IMR-90 (cell line): ENCODE measurements at regions of chr7 and their contacts with region 1.

Region 1: DNA sequence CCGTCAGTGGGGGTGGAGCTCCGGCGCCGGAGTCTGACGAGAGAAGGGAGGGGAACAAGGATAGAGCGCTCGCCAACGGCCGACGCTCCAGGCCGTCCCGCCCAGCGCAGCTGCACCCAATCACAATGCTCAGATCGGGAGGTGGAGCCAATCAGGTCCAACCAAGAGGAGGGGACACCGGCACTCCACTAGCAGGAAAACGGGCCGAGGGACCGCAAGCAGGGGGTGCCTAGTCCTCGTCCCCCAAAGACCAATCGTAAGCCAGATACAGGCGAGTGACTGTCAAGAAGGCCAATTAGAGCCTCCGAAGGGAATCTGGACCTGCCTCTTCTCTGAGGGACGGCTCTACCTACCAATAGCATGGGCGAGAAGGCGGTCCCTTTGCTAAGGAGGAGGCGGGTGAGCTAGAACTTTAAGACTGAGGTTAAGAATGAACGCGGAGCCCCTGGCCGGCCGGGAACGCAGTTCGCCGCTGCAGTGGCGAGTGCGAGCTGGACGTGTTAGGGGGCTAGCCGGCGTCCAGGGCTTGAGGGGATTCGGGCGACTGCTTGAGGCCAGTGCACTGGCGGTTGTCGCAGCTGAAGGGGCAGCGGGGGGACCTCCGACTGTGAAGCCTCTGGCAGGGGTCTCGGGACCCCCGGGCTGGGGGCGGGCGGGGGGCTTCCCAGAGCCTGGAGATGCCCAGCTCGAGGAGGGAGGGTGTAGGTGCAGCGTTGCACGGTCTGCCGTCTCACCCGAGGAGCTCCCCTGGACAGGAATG is at the start of gene FBXO24:
- DNase-seq: peak; percentile 100
- ATAC-seq: peak; percentile 86
- H3K4me3 ChIP-seq: peak within 1 kb of the TSS; percentile 72
- H3K27ac ChIP-seq: peak within 1 kb of the TSS; percentile 90
- H3K4me1 ChIP-seq: peaks cover 17% of the 10 kb centered on the region
- H3K27me3 ChIP-seq: no peaks in the 10 kb centered on the region
- CTCF ChIP-seq: 0 out of 2 replicates have a peak, but pooled peaks have one; percentile 7
- POLR2A ChIP-seq: no peak
- RAD21 ChIP-seq: no peak
- total RNA-seq, gene FBXO24: 0.28 and 0.54 TPM in 2 replicates

Region 2: DNA sequence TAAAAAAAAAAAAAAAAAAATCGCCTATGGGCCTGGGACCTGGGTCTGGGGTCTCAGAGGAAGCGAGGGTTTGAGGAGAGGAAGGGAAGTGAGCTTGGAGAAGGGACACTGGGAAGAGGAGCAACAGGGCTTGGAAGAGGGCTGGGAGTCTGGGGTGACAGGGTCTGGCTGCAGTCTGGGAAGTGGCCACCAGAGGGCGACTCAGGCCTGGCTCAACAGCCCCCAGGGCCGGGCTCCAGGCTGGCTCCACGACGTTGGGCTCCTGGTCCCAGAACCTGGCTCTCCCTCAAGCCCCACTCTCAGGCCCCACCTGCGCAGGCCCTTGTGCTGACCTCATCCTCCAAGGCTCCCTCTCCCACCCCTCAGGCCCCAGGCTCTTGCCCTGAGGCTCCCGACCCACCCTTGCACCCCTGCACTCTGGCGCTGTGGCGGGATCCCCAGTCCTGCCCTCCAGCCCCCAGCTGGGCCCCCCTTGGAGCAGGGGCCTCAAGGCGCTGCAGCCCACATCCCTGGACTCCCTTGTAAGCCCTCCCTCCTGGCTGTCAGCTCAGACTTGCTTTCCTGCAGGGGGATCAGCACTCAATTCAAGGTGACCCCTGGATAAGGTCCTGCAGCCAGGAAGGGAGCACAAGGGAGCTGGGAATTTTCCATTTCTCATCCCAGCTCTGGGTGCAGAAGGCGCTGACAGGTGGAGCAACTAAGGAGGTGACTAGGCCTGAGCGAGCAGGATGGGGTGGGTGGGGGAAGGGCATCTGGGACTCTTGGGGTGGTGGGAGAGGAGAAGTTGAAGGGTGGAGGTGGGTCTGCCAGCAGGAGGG is 117.0 kb before region 1 on chr7:
- CTCF ChIA-PET with region 1: interaction called, 3 read pairs
- POLR2A ChIA-PET with region 1: interaction called, 18 read pairs
- dilution Hi-C with region 1: no loop called
- in situ Hi-C with region 1: no loop called
- intact Hi-C with region 1: no loop called
- DNase-seq: peak; percentile 64
- ATAC-seq: peak; percentile 82
- H3K4me3 ChIP-seq: no peak overlapping the region
- H3K27ac ChIP-seq: no peak overlapping the region
- H3K4me1 ChIP-seq: peaks cover 7% of the 10 kb centered on the region
- H3K27me3 ChIP-seq: no peaks in the 10 kb centered on the region
- CTCF ChIP-seq: peak; percentile 96
- POLR2A ChIP-seq: no peak
- RAD21 ChIP-seq: peak; percentile 96

Region 3: DNA sequence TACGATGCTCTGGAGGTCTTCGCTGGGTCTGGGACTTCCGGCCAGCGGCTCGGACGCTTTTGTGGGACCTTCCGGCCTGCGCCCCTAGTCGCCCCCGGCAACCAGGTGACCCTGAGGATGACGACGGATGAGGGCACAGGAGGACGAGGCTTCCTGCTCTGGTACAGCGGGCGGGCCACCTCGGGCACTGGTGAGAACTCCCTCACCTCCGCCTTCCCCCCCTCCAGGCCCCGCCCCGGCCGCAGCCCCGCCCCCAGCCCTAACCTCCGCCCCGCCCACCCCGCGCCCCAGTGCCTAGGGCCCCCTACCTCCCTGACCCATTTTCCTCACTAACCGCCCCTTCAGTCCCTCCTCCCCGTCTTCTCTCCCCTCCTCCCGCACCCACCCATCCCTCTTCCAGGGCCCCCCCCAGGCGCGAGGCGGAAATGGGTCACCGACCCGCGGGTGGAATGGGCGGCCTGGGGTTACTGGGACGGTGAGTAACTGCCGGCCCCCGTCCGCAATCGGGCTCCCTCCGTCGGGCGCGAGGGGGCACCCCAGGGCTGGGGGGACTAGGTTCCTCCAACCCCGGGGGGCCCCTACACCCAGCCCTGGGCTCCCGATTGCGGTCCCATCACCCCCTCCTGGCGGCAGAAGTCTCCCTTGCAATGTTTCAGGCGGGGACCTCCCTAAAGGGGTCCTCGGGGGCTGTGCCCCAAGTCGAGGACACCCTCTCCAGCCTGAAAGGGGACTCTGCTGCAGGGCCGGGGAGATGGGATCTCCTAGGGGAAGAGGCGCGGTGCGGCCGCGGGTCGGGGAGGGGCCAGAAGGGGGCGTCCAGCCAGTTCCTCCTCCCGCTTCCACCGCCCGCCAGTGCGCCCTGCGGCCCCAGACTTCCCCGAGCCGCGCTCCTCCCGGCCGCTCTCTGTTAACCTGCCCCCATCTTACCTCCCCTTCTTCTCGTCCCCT is 17.9 kb after region 1 on chr7:
- CTCF ChIA-PET with region 1: interaction called, 4 read pairs
- POLR2A ChIA-PET with region 1: interaction called, 7 read pairs
- dilution Hi-C with region 1: no loop called
- in situ Hi-C with region 1: no loop called
- intact Hi-C with region 1: loop called (anchors 1 kb)
- DNase-seq: peak; percentile 46
- ATAC-seq: peak; percentile 54
- H3K4me3 ChIP-seq: peak overlapping the region; percentile 69
- H3K27ac ChIP-seq: peak overlapping the region; percentile 99
- H3K4me1 ChIP-seq: peaks cover 9% of the 10 kb centered on the region
- H3K27me3 ChIP-seq: no peaks in the 10 kb centered on the region
- CTCF ChIP-seq: peak; percentile 36
- POLR2A ChIP-seq: no peak
- RAD21 ChIP-seq: peak; percentile 18; the same call in 1 of the 2 replicates

Region 4: GRCh38 chr7:100673300-100673941 is 87.0 kb after region 1 on chr7 and contains the start of gene GNB2:
- CTCF ChIA-PET with region 1: no interaction called
- POLR2A ChIA-PET with region 1: interaction called, 3 read pairs
- dilution Hi-C with region 1: no loop called
- in situ Hi-C with region 1: no loop called
- intact Hi-C with region 1: loop called (anchors 1 kb)
- DNase-seq: peak; percentile 99
- ATAC-seq: peak; percentile 86
- H3K4me3 ChIP-seq: peak within 1 kb of the TSS; percentile 85
- H3K27ac ChIP-seq: peak within 1 kb of the TSS; percentile 97
- H3K4me1 ChIP-seq: peaks cover 4% of the 10 kb centered on the region; the same call in 1 of the 2 replicates
- H3K27me3 ChIP-seq: no peaks in the 10 kb centered on the region
- CTCF ChIP-seq: no peak
- POLR2A ChIP-seq: peak; percentile 25; the same call in 1 of the 2 replicates
- RAD21 ChIP-seq: no peak
- total RNA-seq, gene GNB2: 62.0 and 67.5 TPM in 2 replicates

Region 5: GRCh38 chr7:100804676-100805431 is 218.4 kb after region 1 on chr7:
- CTCF ChIA-PET with region 1: no interaction called
- POLR2A ChIA-PET with region 1: no interaction called
- dilution Hi-C with region 1: no loop called
- in situ Hi-C with region 1: no loop called
- intact Hi-C with region 1: no loop called
- DNase-seq: no peak
- ATAC-seq: no peak
- H3K4me3 ChIP-seq: no peak overlapping the region
- H3K27ac ChIP-seq: no peak overlapping the region
- H3K4me1 ChIP-seq: peaks cover 18% of the 10 kb centered on the region
- H3K27me3 ChIP-seq: no peaks in the 10 kb centered on the region
- CTCF ChIP-seq: no peak
- POLR2A ChIP-seq: no peak
- RAD21 ChIP-seq: no peak

Region 6: DNA sequence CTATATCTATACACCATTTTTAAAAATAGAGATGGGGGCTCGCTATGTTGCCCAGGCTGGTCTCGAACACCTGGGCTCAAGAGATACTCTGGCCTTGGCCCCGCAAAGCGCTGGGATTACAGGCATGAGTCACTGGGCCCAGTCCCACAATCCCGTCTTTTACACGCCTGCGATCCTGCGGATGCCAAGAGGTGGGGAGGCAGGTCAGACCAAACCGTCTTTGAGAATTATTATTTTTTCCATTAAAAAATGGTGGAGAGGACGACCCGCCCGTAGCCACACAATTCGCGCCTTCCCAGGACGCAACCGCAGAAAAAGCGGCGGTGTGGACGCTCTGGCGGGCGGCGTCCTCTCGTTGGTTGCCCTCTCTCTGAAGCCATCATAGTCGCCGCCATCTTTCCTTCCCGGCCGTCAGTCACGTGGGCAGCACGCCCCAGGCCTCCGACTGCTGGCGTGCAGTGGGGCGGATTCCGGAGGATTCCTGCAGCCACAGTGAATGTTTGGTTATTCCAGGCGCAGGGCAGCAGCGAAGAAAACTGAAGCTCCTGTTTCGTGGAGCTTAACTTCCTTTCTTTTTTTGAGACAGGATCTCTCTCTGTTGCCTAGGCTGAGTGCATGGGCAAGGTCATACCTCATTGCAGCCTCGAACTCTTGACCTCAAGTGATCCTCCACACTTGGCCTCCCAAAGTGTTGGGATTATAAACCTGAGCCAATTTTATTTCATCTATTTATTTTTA is 250.8 kb after region 1 on chr7:
- CTCF ChIA-PET with region 1: no interaction called
- POLR2A ChIA-PET with region 1: no interaction called
- dilution Hi-C with region 1: no loop called
- in situ Hi-C with region 1: no loop called
- intact Hi-C with region 1: loop called (anchors 10 kb)
- DNase-seq: peak; percentile 90
- ATAC-seq: peak; percentile 100
- H3K4me3 ChIP-seq: peak overlapping the region; percentile 33
- H3K27ac ChIP-seq: peak overlapping the region; percentile 87
- H3K4me1 ChIP-seq: no peaks in the 10 kb centered on the region
- H3K27me3 ChIP-seq: no peaks in the 10 kb centered on the region
- CTCF ChIP-seq: no peak
- POLR2A ChIP-seq: no peak
- RAD21 ChIP-seq: no peak

Region 7: GRCh38 chr7:100874577-100875355 is 288.3 kb after region 1 on chr7 and contains the start of gene SRRT:
- CTCF ChIA-PET with region 1: no interaction called
- POLR2A ChIA-PET with region 1: interaction called, 3 read pairs
- dilution Hi-C with region 1: no loop called
- in situ Hi-C with region 1: loop called (anchors 25 kb)
- intact Hi-C with region 1: no loop called
- DNase-seq: peak; percentile 97
- ATAC-seq: peak; percentile 98
- H3K4me3 ChIP-seq: peak within 1 kb of the TSS; percentile 76
- H3K27ac ChIP-seq: peak within 1 kb of the TSS; percentile 99
- H3K4me1 ChIP-seq: peaks cover 9% of the 10 kb centered on the region
- H3K27me3 ChIP-seq: no peaks in the 10 kb centered on the region
- CTCF ChIP-seq: 0 out of 2 replicates have a peak, but pooled peaks have one; percentile 24
- POLR2A ChIP-seq: peak; percentile 93
- RAD21 ChIP-seq: no peak
- total RNA-seq, gene SRRT: 41.4 and 45.3 TPM in 2 replicates